ENCODE measurements at regions of chr1 and their contacts with region 1.

Region 1: GRCh38 chr1:182962554-182963115 is 9.7 kb upstream of the SHCBP1L start:
- DNase-seq: peak; percentile 91
- H3K4me3 ChIP-seq: peak overlapping the region in 2 of 3 experiments; percentile 7 to 60
- H3K27ac ChIP-seq: peak overlapping the region; percentile 73
- H3K4me1 ChIP-seq: peaks cover 6% of the 10 kb centered on the region
- H3K27me3 ChIP-seq: no peaks in the 10 kb centered on the region
- CTCF ChIP-seq: peak; percentile 83 to 86
- POLR2A ChIP-seq: peak; percentile 63

Region 2: DNA sequence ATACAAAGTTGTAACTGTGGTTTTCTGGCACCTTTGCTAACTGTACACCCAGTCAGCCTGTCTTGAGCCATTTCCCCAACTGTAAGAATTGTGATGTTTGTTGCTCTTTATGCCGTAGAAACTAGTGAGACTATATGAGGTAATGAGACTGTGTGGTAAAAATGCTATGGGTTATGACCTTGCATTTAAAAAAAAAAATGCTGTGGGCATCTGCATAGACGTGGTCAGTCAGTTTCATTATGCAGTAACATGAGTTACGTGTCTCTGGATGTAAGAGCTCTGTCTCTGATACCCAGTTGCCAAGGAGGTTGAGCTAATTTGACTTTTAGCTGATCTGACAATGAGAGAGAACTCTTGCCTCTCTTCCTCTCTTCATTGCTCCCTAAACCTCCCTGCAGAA is 142.8 kb after region 1 on chr1:
- CTCF ChIA-PET with region 1: interaction called, 12 read pairs
- POLR2A ChIA-PET with region 1: no interaction called
- dilution Hi-C with region 1: no loop called
- intact Hi-C with region 1: no loop called
- DNase-seq: no peak
- H3K4me3 ChIP-seq: no peak overlapping the region
- H3K27ac ChIP-seq: no peak overlapping the region
- H3K4me1 ChIP-seq: no peaks in the 10 kb centered on the region
- H3K27me3 ChIP-seq: no peaks in the 10 kb centered on the region
- CTCF ChIP-seq: no peak
- POLR2A ChIP-seq: no peak

Region 3: DNA sequence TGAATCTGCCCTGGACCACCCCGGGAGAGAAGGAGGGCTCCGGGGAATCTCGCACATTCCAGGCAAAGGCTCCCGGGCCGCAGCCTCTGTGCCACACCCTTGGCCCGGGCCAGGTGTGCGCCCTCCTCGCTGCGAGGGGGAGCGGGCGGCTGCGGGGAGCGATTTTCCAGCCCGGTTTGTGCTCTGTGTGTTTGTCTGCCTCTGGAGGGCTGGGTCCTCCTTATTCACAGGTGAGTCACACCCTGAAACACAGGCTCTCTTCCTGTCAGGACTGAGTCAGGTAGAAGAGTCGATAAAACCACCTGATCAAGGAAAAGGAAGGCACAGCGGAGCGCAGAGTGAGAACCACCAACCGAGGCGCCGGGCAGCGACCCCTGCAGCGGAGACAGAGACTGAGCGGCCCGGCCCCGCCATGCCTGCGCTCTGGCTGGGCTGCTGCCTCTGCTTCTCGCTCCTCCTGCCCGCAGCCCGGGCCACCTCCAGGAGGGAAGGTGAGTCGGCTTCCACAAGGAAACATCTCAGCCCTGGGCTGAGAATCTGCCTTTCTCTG is 223.4 kb after region 1 on chr1 and contains the start of gene LAMC2:
- CTCF ChIA-PET with region 1: interaction called, 3 read pairs
- POLR2A ChIA-PET with region 1: no interaction called
- dilution Hi-C with region 1: no loop called
- intact Hi-C with region 1: loop called (anchors 1 kb)
- DNase-seq: peak; percentile 46
- H3K4me3 ChIP-seq: peak within 1 kb of the TSS in 2 of 3 experiments; percentile 13 to 41
- H3K27ac ChIP-seq: peak within 1 kb of the TSS; percentile 22
- H3K4me1 ChIP-seq: peaks cover 12% of the 10 kb centered on the region
- H3K27me3 ChIP-seq: no peaks in the 10 kb centered on the region
- CTCF ChIP-seq: peak; percentile 33 to 47
- POLR2A ChIP-seq: no peak
- total RNA-seq, gene LAMC2: 0.82 and 4.0 TPM in 2 replicates

Region 4: DNA sequence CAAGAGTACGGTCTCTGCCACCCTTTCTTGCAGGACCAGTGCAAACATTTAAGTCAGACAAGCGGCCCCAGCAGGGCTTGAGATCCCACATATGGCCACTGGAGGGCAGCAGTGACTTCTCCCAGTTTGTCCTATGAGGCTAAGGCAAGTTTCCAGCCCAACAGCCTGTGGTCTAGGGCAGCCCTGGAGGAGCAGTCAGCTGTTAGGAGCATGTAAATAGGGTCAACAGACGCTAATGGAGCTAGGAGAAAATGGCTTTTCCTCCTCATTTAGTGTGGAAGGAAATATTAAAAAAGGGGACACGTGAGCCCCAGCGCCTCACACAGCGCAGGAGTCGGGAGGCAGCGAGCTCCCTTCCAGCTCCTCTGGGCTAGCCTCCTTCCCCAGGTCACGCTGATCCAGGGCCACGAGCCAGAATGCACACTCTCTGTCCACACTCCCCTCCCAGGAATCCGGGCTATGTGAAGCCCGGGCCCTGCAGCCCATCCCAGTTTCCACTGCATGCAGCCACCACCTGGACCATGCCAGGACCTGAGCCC is 319.0 kb after region 1 on chr1:
- CTCF ChIA-PET with region 1: interaction called, 27 read pairs
- POLR2A ChIA-PET with region 1: no interaction called
- dilution Hi-C with region 1: no loop called
- intact Hi-C with region 1: loop called (anchors 1 kb)
- DNase-seq: peak; percentile 92
- H3K4me3 ChIP-seq: no peak overlapping the region
- H3K27ac ChIP-seq: no peak overlapping the region
- H3K4me1 ChIP-seq: peaks cover 12% of the 10 kb centered on the region
- H3K27me3 ChIP-seq: no peaks in the 10 kb centered on the region
- CTCF ChIP-seq: peak; percentile 83 to 91
- POLR2A ChIP-seq: no peak

Region 5: DNA sequence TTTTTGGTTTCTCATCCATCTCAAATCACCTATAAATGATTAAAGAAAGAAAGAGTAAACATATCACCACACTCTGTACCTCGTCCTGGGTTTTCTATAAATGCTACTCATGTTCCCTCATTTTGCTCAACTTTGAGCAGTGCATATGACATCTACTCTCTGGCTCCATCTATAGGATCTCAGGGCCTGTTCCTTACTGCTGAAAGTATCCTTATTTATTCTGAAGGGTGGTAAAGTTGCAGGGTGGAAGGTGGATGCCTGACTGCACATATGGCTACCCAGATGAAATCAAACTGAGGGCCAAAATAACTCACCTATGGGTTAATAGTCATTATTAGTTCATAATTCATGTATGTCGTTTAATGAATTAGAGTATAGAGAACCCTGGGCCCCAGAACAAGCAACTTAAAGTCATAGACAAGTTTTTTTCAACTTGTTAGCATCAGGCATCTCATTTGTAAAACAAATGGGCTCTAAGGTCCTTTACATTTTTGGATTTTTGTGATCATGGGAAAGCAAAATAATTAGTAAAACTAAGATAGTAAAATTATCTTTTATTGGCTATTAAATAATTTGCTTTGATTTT is 581.1 kb after region 1 on chr1:
- CTCF ChIA-PET with region 1: no interaction called
- POLR2A ChIA-PET with region 1: no interaction called
- dilution Hi-C with region 1: no loop called
- intact Hi-C with region 1: loop called (anchors 2 kb)
- DNase-seq: peak; percentile 75
- H3K4me3 ChIP-seq: no peak overlapping the region
- H3K27ac ChIP-seq: no peak overlapping the region
- H3K4me1 ChIP-seq: no peaks in the 10 kb centered on the region
- H3K27me3 ChIP-seq: no peaks in the 10 kb centered on the region
- CTCF ChIP-seq: peak; percentile 62 to 71
- POLR2A ChIP-seq: no peak

Measured in endothelial cell of umbilical vein (primary cell).